HepG2 (cell line): ENCODE measurements at regions of chr12 and their contacts with region 1.

Region 1: GRCh38 chr12:51980051-51980808 is 26.5 kb upstream of the TAMALIN start:
- DNase-seq: peak; percentile 50
- ATAC-seq: peak; percentile 74
- H3K4me3 ChIP-seq: no peak overlapping the region
- H3K27ac ChIP-seq: no peak overlapping the region
- H3K4me1 ChIP-seq: peaks cover 31% of the 10 kb centered on the region
- H3K27me3 ChIP-seq: no peaks in the 10 kb centered on the region
- CTCF ChIP-seq: peak; percentile 91
- EP300 ChIP-seq: no peak
- POLR2A ChIP-seq: no peak
- RAD21 ChIP-seq: peak; percentile 83

Region 2: DNA sequence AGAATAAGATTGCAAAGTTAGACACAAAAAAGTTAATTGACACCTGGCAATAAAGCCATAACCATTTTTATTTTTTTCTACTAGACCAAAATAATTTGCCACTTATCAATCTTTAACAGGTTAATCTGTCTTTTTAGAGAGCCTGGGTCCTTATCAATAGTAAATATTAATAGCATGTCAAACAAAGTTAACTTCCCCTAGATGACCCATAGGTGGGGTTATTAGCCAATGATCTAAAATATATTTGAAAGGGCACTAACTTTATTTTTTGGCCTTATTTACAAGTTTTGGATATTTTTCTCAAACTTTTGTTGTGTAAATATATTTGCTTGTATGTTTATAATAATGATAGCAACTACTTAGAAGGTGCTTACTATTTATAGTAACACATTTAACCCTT is 88.4 kb before region 1 on chr12:
- CTCF ChIA-PET with region 1: interaction called, 16 read pairs
- POLR2A ChIA-PET with region 1: no interaction called
- in situ Hi-C with region 1: loop called (anchors 10 kb)
- intact Hi-C with region 1: loop called (anchors 1 kb)
- DNase-seq: no peak
- ATAC-seq: no peak
- H3K4me3 ChIP-seq: no peak overlapping the region
- H3K27ac ChIP-seq: no peak overlapping the region
- H3K4me1 ChIP-seq: peaks cover 22% of the 10 kb centered on the region; the same call in 1 of the 2 replicates
- H3K27me3 ChIP-seq: peaks cover 7 to 22% of the 10 kb centered on the region in 2 experiments; a peak in 4 of 5 replicates
- CTCF ChIP-seq: peak; percentile 17; the same call in 1 of the 2 replicates
- EP300 ChIP-seq: no peak
- POLR2A ChIP-seq: no peak
- RAD21 ChIP-seq: no peak

Region 3: DNA sequence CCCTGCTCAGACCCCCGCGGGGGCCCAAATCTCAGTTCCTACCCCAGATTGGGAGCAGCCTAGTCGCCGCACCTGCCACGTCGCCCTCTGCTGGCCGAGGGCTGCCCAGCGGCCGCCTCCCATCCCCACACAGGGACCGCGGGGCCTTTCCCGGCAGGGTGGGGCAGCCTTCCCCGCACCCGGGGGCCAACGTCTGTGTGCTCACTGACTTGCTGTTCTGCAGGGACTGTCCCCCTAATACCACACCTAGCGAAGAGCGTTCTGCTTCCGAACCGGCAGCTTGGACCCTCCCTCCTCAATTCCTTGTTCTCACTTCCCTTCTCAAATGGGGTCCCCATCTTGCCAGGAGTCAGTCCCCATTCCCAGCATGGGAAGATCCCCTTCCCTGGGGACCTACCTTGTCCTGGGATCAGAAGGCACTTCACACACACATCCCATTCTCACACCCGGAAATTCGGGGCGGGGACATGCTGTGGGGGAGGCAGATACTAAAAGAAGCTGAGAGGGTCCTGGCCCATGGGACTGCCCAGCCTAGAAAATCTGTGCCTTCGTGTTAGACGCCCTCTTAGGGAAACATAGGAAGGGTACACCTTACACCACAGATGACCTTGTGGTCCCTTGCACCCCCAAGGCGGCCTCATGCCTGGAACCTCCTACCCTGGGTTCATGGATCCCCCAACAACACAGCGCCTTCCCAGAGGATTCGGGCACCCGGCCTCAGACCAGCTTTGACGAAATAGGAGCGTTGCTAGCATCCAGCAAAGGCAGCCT is 56.5 kb before region 1 on chr12:
- CTCF ChIA-PET with region 1: interaction called, 36 read pairs
- POLR2A ChIA-PET with region 1: no interaction called
- in situ Hi-C with region 1: no loop called
- intact Hi-C with region 1: loop called (anchors 1 kb)
- DNase-seq: no peak
- ATAC-seq: peak; percentile 85
- H3K4me3 ChIP-seq: peak overlapping the region in 2 of 3 experiments; percentile 8 to 56; a peak in 2 of 6 replicates
- H3K27ac ChIP-seq: no peak overlapping the region
- H3K4me1 ChIP-seq: peaks cover 37% of the 10 kb centered on the region
- H3K27me3 ChIP-seq: peaks cover 1 to 14% of the 10 kb centered on the region in 2 experiments; a peak in 4 of 5 replicates
- CTCF ChIP-seq: peak; percentile 86
- EP300 ChIP-seq: no peak
- POLR2A ChIP-seq: no peak
- RAD21 ChIP-seq: peak; percentile 50; the same call in 1 of the 2 replicates

Region 4: DNA sequence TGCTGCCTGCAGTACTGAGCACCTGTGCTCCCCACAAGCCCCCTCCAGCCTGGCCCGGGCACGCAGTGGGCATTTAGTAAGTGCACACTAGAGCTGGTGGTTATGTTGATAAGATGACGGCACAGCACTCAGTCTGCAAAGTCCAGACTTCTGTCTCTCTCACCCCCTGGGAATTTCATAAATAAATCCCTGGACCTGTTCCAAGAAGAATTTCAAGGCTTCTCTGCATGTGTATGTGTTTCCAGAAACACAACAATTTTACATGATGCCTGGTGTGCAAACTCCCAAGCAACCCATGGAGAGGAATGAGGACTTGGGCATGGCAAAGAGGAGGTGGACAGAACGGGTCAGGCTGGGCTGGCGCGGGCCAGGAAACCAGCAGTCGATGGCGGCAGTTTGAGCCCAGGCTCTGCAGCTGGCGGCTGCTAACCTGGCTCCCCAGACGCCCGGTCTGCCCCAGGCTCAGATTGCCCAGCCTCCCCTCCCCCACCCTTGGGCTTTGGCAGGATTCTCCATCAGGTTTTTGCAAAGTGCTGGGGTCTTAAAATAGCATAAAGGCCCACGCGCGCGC is 39.1 kb before region 1 on chr12:
- CTCF ChIA-PET with region 1: no interaction called
- POLR2A ChIA-PET with region 1: no interaction called
- in situ Hi-C with region 1: no loop called
- intact Hi-C with region 1: loop called (anchors 5 kb)
- DNase-seq: no peak
- ATAC-seq: peak; percentile 32; the same call in 1 of the 3 replicates
- H3K4me3 ChIP-seq: no peak overlapping the region
- H3K27ac ChIP-seq: no peak overlapping the region
- H3K4me1 ChIP-seq: peaks cover 15% of the 10 kb centered on the region
- H3K27me3 ChIP-seq: peaks cover 1 to 38% of the 10 kb centered on the region in 2 experiments; a peak in 4 of 5 replicates
- CTCF ChIP-seq: no peak
- EP300 ChIP-seq: no peak
- POLR2A ChIP-seq: no peak
- RAD21 ChIP-seq: no peak

Region 5: DNA sequence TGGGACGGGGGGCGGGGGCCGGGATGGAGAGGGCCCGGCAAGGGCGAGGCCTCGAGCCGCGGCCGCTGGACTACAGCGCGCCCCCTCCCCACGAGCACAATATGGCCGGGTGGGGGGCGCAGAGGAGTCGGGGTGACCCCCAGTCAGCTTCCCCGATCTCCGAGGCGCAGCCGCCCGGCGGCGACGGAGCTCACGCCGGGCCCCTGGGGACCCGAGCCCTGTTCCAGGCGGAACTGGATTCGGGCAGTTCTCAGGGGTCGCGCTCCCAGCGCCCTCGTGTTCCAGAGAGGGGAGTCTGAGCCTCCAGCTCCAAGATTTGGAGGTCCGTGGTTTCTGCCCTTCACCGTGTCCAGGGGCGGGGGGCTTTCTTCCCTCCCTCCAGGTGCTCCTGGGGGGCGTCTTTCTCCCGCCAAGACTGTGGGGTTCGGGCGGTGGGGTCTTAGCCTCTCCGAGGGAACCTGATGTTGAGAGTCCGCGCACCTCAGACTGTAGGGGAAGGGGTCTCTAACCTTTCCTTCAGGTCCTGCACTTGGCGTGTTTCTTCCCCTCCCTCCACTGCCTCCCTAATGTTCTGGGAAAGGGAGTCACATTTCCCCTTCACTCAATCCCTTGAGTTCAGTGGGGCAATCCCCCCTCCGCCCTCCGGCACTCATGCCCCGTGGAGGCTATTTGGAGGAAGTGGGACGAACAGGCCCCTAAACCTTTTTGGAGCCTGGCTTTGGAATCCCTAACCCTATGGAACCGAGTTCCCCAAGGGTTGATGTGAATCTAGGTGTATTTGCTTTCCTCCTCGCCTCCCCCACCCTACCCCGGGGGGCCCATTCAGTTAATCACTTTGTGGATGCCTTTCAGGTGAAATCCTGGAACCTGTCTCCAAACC is 28.1 kb before region 1 on chr12:
- CTCF ChIA-PET with region 1: no interaction called
- POLR2A ChIA-PET with region 1: interaction called, 5 read pairs
- in situ Hi-C with region 1: no loop called
- intact Hi-C with region 1: loop called (anchors 1 kb)
- DNase-seq: no peak
- ATAC-seq: peak; percentile 36
- H3K4me3 ChIP-seq: peak overlapping the region; percentile 77 to 88 (median 85)
- H3K27ac ChIP-seq: peak overlapping the region; percentile 60
- H3K4me1 ChIP-seq: peaks cover 44% of the 10 kb centered on the region
- H3K27me3 ChIP-seq: peaks cover 5 to 29% of the 10 kb centered on the region in 2 experiments
- CTCF ChIP-seq: no peak
- EP300 ChIP-seq: no peak
- POLR2A ChIP-seq: no peak
- RAD21 ChIP-seq: no peak

Region 6: DNA sequence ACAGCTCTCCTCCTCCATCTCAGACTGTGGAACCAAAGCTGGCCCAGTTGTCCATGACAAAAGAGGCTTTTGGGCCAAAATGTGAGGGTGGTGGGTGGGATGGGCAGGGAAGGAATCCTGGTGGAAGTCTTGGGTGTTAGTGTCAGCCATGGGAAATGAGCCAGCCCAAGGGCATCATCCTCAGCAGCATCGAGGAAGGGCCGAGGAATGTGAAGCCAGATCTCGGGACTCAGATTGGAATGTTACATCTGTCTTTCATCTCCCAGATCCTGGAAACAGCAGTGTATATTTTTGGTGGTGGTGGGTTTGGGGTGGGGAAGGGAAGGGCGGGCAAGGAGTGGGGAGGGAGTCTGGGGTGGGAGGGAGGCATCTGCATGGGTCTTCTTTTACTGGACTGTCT is 14.7 kb after region 1 on chr12:
- CTCF ChIA-PET with region 1: no interaction called
- POLR2A ChIA-PET with region 1: no interaction called
- in situ Hi-C with region 1: no loop called
- intact Hi-C with region 1: no loop called
- DNase-seq: no peak
- ATAC-seq: no peak
- H3K4me3 ChIP-seq: no peak overlapping the region
- H3K27ac ChIP-seq: no peak overlapping the region
- H3K4me1 ChIP-seq: no peaks in the 10 kb centered on the region
- H3K27me3 ChIP-seq: no peaks in the 10 kb centered on the region
- CTCF ChIP-seq: no peak
- EP300 ChIP-seq: no peak
- POLR2A ChIP-seq: no peak
- RAD21 ChIP-seq: no peak